Posterior cingulate gyrus (tissue), 11 donors: ENCODE measurements at regions of chr2 and their contacts with region 1.

Region 1: GRCh38 chr2:62787386-62787785 is 81.9 kb downstream of the EHBP1 start:
- DNase-seq: no peak

Region 2: DNA sequence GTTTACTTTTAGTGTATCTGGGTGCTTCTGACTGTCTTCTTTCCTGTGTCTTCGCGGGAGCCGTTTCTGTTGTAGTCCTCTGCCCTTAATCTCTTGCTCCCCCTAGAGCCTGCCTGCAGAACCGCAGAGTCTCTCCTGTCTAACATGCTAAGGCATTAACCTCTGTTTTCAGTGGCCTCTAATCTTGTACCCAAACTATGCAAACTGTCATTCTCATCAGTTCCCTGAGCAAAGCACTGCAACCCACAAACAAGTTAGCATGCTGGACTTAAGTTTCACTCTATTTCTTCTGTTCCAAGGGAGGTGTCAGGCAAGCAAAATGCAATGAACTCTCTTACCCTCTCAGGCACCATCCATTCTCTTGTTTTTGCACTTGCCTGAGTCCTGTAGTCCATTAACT is 401.6 kb after region 1 on chr2:
- intact Hi-C with region 1: loop called (anchors 5 kb)
- DNase-seq: no peak

Region 3: DNA sequence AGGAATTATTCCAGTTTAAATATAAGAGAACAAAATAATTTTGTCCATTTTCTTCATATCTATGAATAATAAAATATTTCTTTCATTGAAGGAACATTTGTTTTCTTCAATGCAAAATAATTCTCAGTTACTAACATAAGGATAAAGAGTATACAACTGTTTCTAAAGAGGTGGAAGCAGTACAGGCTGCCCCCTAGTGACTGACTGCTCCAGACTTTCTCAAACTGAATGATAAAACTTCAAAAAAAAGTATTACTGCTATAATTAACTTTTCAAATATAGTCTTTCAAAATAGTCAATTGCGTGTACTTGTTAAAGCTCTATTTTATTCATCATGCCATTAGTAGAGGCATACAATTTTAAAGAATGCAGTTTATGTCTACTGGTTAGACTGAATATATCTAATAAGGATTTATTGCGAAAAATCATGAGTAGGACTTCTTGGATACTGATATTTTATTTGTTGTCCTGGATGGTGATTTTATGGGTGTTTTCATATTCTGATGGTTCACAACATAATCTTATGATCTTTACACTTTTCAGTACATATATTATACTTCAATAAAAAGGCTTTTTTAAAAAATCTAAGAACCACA is 700.8 kb after region 1 on chr2:
- intact Hi-C with region 1: loop called (anchors 2 kb)
- DNase-seq: peak in 5 of 10 donors; percentile 18 to 58 (median 36)